ENCODE measurements at regions of chr15 and their contacts with region 1.

Region 1: DNA sequence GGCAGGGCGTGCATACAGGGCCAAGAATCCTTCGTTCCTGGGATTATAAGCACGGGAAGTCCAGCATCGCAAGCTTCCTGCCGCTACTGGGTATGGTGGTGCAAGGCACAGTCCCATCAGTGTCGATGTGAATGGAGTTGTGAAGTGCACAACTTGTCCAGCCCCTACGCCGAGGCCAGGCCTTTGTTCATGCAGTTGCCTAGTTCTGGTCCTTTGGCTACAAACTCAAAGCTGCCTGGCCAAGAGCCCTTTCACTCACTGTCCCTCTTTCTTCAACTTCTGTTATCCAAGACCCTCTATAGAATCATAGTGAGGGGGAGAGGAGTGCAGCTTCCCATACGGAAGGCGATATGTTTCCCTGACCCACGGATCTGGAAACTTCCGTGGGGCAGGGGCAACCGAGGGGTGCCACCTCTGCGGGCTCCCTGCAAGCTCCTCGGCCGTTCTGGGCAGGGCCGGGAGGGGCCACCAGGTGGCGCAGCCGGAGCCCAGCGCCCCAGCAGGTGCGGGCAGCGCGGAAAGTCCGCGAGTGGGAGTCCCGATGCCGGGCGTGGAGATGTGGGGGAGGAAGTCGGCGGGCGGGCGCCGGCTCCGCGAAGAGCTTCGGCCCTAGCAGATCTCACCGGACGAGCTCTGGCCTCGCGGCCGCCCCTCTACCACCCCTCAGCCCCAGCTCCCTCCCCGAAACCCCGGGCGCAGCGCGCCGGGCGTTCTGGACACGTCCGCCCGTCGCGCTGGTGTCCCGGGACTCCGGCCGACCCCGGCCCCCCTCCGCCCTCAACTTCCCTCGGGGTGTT is 693 bp downstream of the RASGRP1 start:
- DNase-seq: peak; percentile 83
- CTCF ChIP-seq: peak; percentile 97

Region 2: GRCh38 chr15:38275959-38276358 is 288.0 kb before region 1 on chr15:
- CTCF ChIA-PET with region 1: no interaction called
- POLR2A ChIA-PET with region 1: no interaction called
- DNase-seq: no peak
- CTCF ChIP-seq: no peak

Region 3: DNA sequence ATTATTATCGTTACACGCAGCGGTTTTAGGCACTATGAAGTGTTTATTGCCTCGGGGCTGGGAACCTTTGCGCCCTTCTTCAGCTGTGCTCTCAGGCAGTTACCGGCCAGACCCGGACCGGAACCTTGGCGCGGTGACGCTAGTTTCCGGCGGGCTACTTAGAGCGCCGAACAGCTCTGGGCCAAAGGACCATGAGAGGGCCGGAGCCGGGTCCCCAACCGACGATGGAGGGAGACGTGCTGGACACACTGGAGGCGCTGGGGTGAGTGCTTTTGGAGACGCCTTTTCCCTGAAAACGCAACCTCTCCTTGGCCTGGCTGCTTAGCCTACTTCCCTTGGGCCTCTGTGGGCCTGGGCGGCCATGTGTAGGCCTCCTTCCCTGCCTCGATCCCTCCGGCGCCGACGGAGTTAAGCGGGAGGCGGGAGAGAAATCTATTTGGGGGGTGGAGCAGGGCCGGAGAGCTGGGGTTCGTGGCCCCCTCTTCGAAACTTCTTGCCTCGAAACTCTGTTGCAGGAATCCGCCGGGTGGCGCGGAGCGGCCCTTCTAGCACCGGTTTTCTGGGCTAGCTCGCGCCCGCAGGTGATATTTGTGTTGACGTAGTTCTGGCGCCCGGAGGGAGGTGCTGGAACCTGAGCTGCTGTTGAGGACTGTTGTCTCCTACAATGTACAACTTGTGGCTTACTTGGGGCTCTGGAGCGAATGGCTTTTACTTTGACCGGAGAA is 109.8 kb before region 1 on chr15 and contains the start of gene FAM98B:
- CTCF ChIA-PET with region 1: interaction called, 17 read pairs
- POLR2A ChIA-PET with region 1: no interaction called
- DNase-seq: peak; percentile 84
- CTCF ChIP-seq: no peak

Region 4: GRCh38 chr15:38521316-38521715 is 42.6 kb before region 1 on chr15:
- CTCF ChIA-PET with region 1: interaction called, 12 read pairs
- POLR2A ChIA-PET with region 1: no interaction called
- DNase-seq: no peak
- CTCF ChIP-seq: no peak

Region 5: DNA sequence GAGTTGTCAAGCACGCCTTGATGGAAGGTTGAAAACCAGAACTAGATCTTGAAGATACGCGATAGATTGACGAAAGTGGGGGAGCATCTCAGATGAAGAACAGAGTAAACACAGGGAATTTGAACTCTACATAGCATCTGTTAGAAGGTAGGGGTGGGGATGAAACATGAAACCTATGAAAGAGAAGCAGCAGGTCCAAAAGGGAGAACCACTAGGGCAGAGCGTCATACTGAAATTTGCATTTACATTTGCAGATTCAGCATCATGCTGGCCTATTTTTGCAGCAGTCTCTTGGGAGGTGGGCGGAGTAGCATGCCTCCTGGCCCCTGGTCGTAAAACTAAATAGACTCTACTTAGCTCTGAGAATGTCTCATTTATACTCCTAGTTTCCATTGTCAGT is 46.8 kb after region 1 on chr15:
- CTCF ChIA-PET with region 1: interaction called, 22 read pairs
- POLR2A ChIA-PET with region 1: no interaction called
- DNase-seq: no peak
- CTCF ChIP-seq: no peak

Region 6: GRCh38 chr15:38631126-38632075 is 67.5 kb after region 1 on chr15:
- CTCF ChIA-PET with region 1: interaction called, 16 read pairs
- POLR2A ChIA-PET with region 1: interaction called, 3 read pairs
- DNase-seq: no peak
- CTCF ChIP-seq: no peak

Region 7: DNA sequence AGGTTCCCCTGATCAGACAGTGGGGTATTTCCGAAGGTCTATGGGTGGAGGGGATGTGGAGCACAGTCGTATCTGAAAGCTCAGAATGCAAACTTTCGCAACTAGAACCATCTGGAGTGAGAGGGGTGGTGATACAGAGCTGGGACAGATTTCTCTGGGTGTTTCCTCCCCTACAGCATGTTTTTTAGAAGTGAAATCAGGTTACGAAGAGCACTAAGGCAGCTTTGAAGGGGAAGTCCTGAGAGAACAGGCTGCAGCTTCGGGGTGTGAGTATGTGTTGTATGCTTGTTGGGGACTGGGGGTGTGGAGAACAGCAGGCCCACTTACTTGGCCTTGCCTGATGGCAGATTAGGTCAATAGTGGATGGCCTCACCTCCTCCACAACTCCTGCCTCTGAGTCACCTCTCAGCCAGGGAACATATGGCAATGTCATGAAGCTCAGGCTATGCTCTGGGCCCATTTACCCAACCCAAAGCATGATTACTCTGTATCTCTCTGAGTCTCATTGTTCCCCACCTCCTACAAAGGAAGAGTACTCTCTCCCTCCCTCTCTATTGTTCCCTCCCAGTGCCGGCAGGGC is 107.8 kb after region 1 on chr15:
- CTCF ChIA-PET with region 1: interaction called, 66 read pairs
- POLR2A ChIA-PET with region 1: interaction called, 5 read pairs
- DNase-seq: no peak
- CTCF ChIP-seq: peak; percentile 0

Region 8: GRCh38 chr15:38699633-38700230 is 135.8 kb after region 1 on chr15:
- CTCF ChIA-PET with region 1: interaction called, 35 read pairs
- POLR2A ChIA-PET with region 1: no interaction called
- DNase-seq: peak; percentile 60
- CTCF ChIP-seq: peak; percentile 93

Region 9: DNA sequence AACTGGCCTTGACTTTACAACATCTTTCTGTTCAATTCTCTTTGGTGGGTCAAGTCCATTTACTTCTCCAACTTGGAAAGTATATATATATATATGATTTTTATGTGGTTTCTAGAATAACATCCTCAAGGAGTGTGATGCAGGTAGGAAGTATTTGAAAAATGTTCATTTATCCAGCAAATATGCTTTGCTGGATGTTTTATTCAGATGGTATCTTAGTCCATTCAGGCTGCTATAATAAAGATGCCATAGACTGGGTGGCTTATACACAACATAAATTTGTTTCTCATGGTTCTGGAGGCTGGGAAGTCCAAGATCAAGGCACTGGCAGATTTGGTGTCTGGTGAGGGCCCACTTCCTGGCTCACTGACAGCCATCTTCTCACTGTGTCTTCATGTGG is 169.4 kb after region 1 on chr15:
- CTCF ChIA-PET with region 1: no interaction called
- POLR2A ChIA-PET with region 1: no interaction called
- DNase-seq: no peak
- CTCF ChIP-seq: no peak